Activated CD4-positive, alpha-beta memory T cell treated with anti-CD3 and anti-CD28 coated beads for 36 hours (primary cell): ENCODE measurements at regions of chr10 and their contacts with region 1.

Region 1: GRCh38 chr10:89861584-89862301 is 160.4 kb downstream of the KIF20B start:
- DNase-seq: peak; percentile 62
- H3K4me3 Mint-ChIP-seq: no peak overlapping the region
- H3K27ac Mint-ChIP-seq: peak overlapping the region; percentile 81
- H3K4me1 Mint-ChIP-seq: peaks cover 27% of the 10 kb centered on the region
- H3K27me3 Mint-ChIP-seq: no peaks in the 10 kb centered on the region

Region 2: DNA sequence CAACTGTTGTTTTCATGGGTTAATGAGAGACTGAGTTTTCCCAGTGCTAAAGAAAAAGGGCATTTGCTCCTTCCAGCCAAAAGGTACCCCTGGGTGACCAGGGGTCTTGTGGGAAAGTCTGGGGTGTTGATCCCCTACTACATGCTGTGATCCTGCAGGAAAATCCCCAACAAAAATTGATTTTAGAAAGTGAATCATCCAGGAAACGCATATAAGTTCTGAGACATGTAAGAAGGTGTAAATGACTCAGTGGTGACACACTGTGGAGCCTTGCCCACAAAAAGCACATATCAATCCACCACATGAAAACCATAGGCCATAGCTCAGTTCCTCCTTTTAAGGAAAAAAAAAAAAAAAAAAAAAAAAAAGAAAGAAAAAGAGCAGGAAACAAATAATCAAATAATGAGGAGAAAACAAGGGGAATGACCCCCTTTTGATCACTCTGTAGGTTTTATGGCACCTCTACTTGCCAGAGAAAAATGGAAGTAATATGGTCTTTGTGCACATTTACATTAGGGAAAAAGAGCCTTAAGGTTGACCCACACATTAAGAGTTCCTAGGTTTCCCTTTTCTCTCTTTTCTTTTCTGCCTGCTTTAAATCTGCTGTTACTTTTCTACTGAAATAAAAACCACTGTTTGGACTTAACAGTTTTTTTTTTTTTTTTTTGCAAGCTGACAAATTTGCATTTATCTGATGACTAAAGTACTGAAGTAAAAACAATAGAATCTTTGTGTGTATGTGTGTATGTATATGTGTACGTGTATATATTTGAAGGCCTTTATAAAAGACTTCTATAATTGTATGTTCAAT is 225.7 kb after region 1 on chr10:
- CTCF ChIA-PET with region 1: no interaction called
- POLR2A ChIA-PET with region 1: no interaction called
- intact Hi-C with region 1: loop called (anchors 5 kb)
- DNase-seq: peak; percentile 24
- H3K4me3 Mint-ChIP-seq: no peak overlapping the region
- H3K27ac Mint-ChIP-seq: no peak overlapping the region
- H3K4me1 Mint-ChIP-seq: peaks cover 7% of the 10 kb centered on the region
- H3K27me3 Mint-ChIP-seq: no peaks in the 10 kb centered on the region

Region 3: DNA sequence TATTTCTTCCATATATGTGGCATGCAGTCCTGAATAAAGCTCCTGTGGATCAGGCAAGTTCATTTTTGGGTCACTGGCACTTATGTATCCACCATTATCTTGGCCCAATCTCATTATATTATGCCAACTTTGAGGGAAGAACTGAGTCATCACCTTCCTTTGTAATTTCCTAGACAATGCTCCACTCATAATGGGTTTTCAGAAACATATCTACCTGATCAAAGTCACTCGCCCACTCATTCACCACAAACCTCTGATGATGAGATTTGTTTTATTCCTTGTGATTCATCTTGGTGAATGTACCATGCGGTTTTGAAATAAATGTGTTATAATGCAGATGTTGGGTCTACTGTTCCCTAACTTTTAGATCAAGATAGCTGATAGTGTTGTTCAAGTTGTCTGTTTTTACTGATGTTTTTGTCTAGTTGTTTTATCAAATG is 365.5 kb after region 1 on chr10:
- CTCF ChIA-PET with region 1: no interaction called
- POLR2A ChIA-PET with region 1: interaction called, 3 read pairs
- intact Hi-C with region 1: loop called (anchors 5 kb)
- DNase-seq: peak; percentile 47
- H3K4me3 Mint-ChIP-seq: no peak overlapping the region
- H3K27ac Mint-ChIP-seq: no peak overlapping the region
- H3K4me1 Mint-ChIP-seq: peaks cover 8% of the 10 kb centered on the region
- H3K27me3 Mint-ChIP-seq: peaks cover 18% of the 10 kb centered on the region